Activated naive CD4-positive, alpha-beta T cell treated with anti-CD3 and anti-CD28 coated beads for 36 hours (primary cell): ENCODE measurements at regions of chr6 and their contacts with region 1.

Region 1: GRCh38 chr6:45822246-45822812 is 193.3 kb downstream of the CLIC5 start:
- DNase-seq: peak; percentile 59
- H3K4me3 Mint-ChIP-seq: peak overlapping the region; percentile 1
- H3K27ac Mint-ChIP-seq: peak overlapping the region; percentile 74
- H3K4me1 Mint-ChIP-seq: peaks cover 19% of the 10 kb centered on the region
- H3K27me3 Mint-ChIP-seq: peaks cover 4% of the 10 kb centered on the region

Region 2: DNA sequence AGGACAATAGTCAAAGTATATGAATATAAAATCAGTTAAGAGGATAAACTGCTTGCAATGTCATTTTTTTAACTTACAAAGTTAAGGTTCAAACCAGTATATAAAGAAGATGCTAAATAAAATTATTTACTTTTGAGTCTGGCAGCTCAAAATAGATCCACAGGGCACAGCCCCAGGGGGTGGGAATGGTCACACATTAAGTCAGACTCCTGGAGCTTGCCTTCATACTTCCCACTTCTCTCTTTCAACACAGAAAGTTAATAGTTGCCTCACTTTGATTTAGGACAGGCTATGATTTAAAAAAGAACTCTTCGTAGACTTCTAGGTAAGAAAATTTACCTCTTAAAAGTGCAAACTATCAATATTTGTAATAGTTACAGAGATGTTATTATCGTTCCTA is 652.5 kb before region 1 on chr6:
- CTCF ChIA-PET with region 1: no interaction called
- intact Hi-C with region 1: no loop called
- DNase-seq: no peak
- H3K4me3 Mint-ChIP-seq: no peak overlapping the region
- H3K27ac Mint-ChIP-seq: no peak overlapping the region
- H3K4me1 Mint-ChIP-seq: peaks cover 32% of the 10 kb centered on the region
- H3K27me3 Mint-ChIP-seq: no peaks in the 10 kb centered on the region

Region 3: GRCh38 chr6:45737331-45738056 is 84.8 kb before region 1 on chr6:
- CTCF ChIA-PET with region 1: no interaction called
- intact Hi-C with region 1: loop called (anchors 1 kb)
- DNase-seq: peak; percentile 38
- H3K4me3 Mint-ChIP-seq: no peak overlapping the region
- H3K27ac Mint-ChIP-seq: peak overlapping the region; percentile 9
- H3K4me1 Mint-ChIP-seq: peaks cover 32% of the 10 kb centered on the region
- H3K27me3 Mint-ChIP-seq: peaks cover 29% of the 10 kb centered on the region